ENCODE measurements at regions of chr16 and their contacts with region 1.

Region 1: GRCh38 chr16:67428146-67428731 is 2.7 kb upstream of the HSD11B2 start:
- DNase-seq: peak; percentile 73
- H3K4me3 Mint-ChIP-seq: no peak overlapping the region
- H3K27ac Mint-ChIP-seq: no peak overlapping the region
- H3K4me1 Mint-ChIP-seq: peaks cover 14% of the 10 kb centered on the region
- H3K27me3 Mint-ChIP-seq: peaks cover 12% of the 10 kb centered on the region
- CTCF ChIP-seq: peak; percentile 81

Region 2: DNA sequence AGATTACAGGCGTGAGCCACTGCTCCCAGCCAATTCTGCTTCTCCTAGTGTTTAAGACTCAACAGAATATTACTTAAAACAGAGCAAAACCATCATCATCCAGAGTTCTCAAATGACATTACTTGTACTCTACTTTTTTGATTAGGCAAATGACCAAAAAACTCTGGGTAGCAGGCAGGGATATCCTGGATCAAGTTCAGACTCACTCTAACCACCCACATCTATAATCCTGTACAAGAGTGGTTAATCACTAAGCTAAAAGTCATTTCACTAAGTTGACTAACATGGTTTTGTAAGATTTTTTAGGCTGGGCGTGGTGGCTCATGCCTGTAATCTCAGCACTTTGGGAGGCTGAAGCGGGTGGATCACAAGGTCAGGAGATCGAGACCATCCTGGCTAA is 604.2 kb before region 1 on chr16:
- CTCF ChIA-PET with region 1: no interaction called
- POLR2A ChIA-PET with region 1: no interaction called
- intact Hi-C with region 1: no loop called
- DNase-seq: no peak
- H3K4me3 Mint-ChIP-seq: no peak overlapping the region
- H3K27ac Mint-ChIP-seq: no peak overlapping the region
- H3K4me1 Mint-ChIP-seq: peaks cover 14% of the 10 kb centered on the region
- H3K27me3 Mint-ChIP-seq: no peaks in the 10 kb centered on the region
- CTCF ChIP-seq: no peak

Region 3: DNA sequence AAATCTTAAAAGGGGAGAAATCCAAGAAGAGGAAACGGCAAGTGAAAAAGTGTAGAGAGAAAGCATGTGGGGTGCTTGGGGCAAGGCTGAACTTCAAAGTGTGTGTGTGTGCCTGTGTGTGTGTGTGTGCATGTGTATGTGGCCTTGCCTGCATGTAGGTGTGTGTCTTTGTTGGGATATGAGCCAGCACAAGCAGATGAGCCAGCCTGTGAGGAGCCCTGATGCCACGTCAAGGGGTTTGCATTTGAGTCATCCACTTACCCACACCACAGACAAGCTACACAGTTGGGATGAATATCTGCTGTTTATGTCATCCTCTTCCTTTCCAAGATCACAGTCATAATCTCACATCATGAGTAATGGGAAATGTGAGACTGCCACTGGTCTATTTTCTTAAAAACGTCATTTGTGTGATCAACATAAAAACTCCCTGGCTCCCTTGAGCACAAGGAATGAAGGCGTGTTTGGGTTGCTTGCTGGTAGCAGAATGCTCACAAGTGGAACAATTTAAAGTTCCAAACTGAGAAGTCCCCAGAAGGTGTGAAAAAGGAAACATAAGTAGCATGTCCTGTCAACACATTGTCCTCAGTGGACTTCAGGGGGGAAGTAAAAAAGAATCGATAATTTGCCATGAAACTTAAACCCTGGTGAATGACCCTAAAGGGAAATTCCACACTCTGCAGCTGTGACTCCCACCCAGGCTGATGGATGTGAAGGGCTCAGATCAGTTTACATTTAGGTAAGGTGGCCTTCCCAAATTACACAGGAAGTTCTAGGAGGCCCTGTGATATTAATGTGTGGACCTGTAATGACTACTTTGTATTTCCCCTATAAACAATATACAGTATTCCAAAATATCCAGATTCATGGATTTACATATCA is 116.4 kb before region 1 on chr16:
- CTCF ChIA-PET with region 1: no interaction called
- POLR2A ChIA-PET with region 1: no interaction called
- intact Hi-C with region 1: no loop called
- DNase-seq: peak; percentile 94
- H3K4me3 Mint-ChIP-seq: no peak overlapping the region
- H3K27ac Mint-ChIP-seq: peak overlapping the region; percentile 71
- H3K4me1 Mint-ChIP-seq: peaks cover 16% of the 10 kb centered on the region
- H3K27me3 Mint-ChIP-seq: peaks cover 12% of the 10 kb centered on the region
- CTCF ChIP-seq: no peak

Region 4: DNA sequence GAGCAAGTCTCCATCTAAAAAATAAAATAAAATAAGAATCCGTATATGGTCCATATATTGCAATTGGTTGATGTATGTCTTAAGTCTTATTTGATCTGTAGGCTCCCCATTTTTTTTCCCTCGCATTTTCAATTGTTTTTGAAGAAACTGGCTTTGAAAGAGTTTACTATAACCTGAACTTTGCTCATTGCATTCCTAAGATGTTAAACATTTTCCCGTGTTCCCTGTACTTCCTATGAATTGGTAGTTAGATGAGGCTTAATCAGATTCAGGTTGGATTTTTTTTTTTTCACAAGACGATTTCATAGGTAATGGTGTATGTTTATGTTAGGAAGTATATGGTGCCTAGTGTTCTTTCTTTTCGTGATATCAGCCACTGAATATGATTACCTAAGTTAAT is 98.3 kb before region 1 on chr16:
- CTCF ChIA-PET with region 1: no interaction called
- POLR2A ChIA-PET with region 1: no interaction called
- intact Hi-C with region 1: no loop called
- DNase-seq: no peak
- H3K4me3 Mint-ChIP-seq: no peak overlapping the region
- H3K27ac Mint-ChIP-seq: no peak overlapping the region
- H3K4me1 Mint-ChIP-seq: no peaks in the 10 kb centered on the region
- H3K27me3 Mint-ChIP-seq: peaks cover 15% of the 10 kb centered on the region
- CTCF ChIP-seq: no peak

Region 5: DNA sequence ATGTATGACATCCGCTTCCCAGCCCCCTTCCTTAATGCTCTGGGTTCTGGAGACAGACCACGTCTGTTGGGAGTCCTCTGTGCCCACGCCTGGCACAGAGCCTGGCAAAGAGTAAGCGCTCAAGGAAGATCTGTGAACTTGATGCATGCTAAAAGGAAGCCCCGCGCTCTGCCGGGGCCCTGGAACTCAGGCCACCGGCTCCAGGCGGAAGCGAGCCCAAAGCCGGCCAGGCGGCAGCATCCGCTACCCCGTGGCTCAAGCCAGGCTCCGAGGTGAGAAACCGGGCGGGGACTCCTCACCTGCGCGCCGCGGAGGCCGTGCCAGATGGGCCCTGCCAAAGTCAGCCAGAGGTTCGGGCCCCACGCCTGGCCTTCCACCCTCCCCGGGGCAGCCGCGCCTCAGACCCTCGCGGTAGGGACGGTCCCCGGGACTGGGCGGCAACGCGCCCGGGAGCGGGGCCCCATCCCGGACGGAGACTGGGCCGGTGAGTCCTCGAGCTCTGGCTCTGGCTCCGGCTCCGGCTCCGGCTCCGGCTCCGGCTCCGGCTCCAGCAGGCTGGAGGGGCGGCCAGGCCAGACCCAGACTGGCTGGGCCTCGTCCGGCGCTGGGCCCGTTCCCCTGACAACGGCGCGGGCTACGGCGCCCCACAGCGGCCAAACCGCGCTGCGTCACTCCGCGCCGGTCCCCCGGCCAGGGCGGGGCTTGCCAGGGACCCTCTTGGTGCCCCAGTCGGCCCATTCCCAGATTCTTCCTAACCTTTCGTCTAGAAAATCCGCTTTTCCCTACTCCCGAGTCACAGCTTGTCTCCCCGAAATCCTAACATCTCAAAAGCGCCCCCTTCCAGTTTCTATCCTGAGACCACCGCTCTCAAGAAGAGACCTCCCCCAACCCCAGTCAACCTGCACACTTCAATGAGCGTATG is 12.1 kb before region 1 on chr16 and contains the start of gene ZDHHC1:
- CTCF ChIA-PET with region 1: interaction called, 20 read pairs
- POLR2A ChIA-PET with region 1: interaction called, 6 read pairs
- intact Hi-C with region 1: no loop called
- DNase-seq: peak; percentile 60
- H3K4me3 Mint-ChIP-seq: peak within 1 kb of the TSS; percentile 81
- H3K27ac Mint-ChIP-seq: peak within 1 kb of the TSS; percentile 79
- H3K4me1 Mint-ChIP-seq: peaks cover 16% of the 10 kb centered on the region
- H3K27me3 Mint-ChIP-seq: peaks cover 14% of the 10 kb centered on the region
- CTCF ChIP-seq: peak; percentile 63
- total RNA-seq, gene ZDHHC1: 5.9 and 7.6 TPM in 2 replicates

Region 6: GRCh38 chr16:67441271-67441753 is 13.1 kb after region 1 on chr16:
- CTCF ChIA-PET with region 1: interaction called, 10 read pairs
- POLR2A ChIA-PET with region 1: interaction called, 13 read pairs
- intact Hi-C with region 1: no loop called
- DNase-seq: peak; percentile 58
- H3K4me3 Mint-ChIP-seq: no peak overlapping the region
- H3K27ac Mint-ChIP-seq: peak overlapping the region; percentile 40
- H3K4me1 Mint-ChIP-seq: peaks cover 20% of the 10 kb centered on the region
- H3K27me3 Mint-ChIP-seq: no peaks in the 10 kb centered on the region
- CTCF ChIP-seq: no peak

Region 7: GRCh38 chr16:67447508-67448076 is 19.4 kb after region 1 on chr16:
- CTCF ChIA-PET with region 1: interaction called, 29 read pairs
- POLR2A ChIA-PET with region 1: interaction called, 13 read pairs
- intact Hi-C with region 1: loop called (anchors 1 kb)
- DNase-seq: peak; percentile 75
- H3K4me3 Mint-ChIP-seq: no peak overlapping the region
- H3K27ac Mint-ChIP-seq: no peak overlapping the region
- H3K4me1 Mint-ChIP-seq: no peaks in the 10 kb centered on the region
- H3K27me3 Mint-ChIP-seq: no peaks in the 10 kb centered on the region
- CTCF ChIP-seq: peak; percentile 53

Region 8: GRCh38 chr16:67461600-67462592 is 33.7 kb after region 1 on chr16:
- CTCF ChIA-PET with region 1: interaction called, 53 read pairs
- POLR2A ChIA-PET with region 1: interaction called, 5 read pairs
- intact Hi-C with region 1: loop called (anchors 1 kb)
- DNase-seq: no peak
- H3K4me3 Mint-ChIP-seq: no peak overlapping the region
- H3K27ac Mint-ChIP-seq: peak overlapping the region; percentile 39
- H3K4me1 Mint-ChIP-seq: peaks cover 28% of the 10 kb centered on the region
- H3K27me3 Mint-ChIP-seq: no peaks in the 10 kb centered on the region
- CTCF ChIP-seq: no peak

Region 9: DNA sequence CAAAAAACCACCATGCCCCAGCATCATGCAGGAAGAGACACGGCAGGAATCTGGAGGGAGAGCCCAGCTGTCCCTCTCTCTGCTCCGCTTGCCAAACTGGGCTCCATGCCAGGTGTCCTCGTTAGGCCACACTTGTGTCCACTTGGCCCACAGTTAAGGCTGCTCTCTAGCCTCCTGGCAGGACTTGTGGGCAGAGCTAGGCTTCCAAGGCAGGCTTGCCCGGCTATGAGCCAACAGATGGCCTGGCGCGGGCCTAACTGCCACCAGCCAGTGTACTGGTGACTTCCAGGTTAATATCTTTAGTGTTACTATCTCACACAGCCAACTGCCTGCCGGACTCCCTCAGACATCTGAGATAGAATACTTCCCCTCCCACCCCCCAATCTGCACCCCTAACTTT is 42.1 kb after region 1 on chr16:
- CTCF ChIA-PET with region 1: interaction called, 53 read pairs
- POLR2A ChIA-PET with region 1: interaction called, 5 read pairs
- intact Hi-C with region 1: loop called (anchors 1 kb)
- DNase-seq: no peak
- H3K4me3 Mint-ChIP-seq: no peak overlapping the region
- H3K27ac Mint-ChIP-seq: no peak overlapping the region
- H3K4me1 Mint-ChIP-seq: peaks cover 22% of the 10 kb centered on the region
- H3K27me3 Mint-ChIP-seq: no peaks in the 10 kb centered on the region
- CTCF ChIP-seq: no peak

Region 10: DNA sequence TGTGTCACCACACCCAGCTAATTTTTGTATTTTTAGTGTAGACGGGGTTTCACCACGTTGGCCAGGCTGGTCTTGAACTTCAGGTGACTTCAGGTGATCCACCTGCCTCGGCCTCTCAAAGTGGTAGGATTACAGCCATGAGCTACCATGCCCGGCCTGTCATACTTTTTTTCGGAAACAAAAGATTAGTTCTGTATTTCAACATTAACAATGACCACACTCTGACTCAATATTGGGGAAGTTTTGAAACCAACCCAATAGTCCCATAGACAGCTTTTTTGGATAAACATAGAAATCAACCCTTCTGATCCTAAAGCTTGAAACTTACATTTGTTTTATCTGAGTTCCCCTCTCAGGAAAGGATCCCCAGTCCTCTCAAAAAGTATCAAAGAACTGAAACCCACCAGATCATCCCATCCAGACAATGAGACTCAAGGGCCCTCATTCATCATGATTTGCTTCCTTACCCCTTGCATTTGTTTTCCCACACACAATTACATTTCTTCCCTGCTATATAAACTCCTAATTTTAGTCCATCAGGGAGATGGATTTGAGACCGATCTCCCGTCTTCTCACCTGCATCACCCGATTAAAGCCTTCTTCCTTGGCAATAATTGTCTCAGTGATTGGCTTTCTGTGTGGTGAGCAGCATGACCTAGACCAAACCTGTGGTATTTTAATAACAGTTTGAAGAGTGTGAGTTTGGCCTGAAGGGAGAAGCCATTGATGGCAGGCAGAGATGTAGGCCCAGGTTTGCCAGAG is 62.3 kb after region 1 on chr16:
- CTCF ChIA-PET with region 1: interaction called, 15 read pairs
- POLR2A ChIA-PET with region 1: no interaction called
- intact Hi-C with region 1: no loop called
- DNase-seq: peak; percentile 36
- H3K4me3 Mint-ChIP-seq: no peak overlapping the region
- H3K27ac Mint-ChIP-seq: no peak overlapping the region
- H3K4me1 Mint-ChIP-seq: no peaks in the 10 kb centered on the region
- H3K27me3 Mint-ChIP-seq: no peaks in the 10 kb centered on the region
- CTCF ChIP-seq: no peak

Region 11: DNA sequence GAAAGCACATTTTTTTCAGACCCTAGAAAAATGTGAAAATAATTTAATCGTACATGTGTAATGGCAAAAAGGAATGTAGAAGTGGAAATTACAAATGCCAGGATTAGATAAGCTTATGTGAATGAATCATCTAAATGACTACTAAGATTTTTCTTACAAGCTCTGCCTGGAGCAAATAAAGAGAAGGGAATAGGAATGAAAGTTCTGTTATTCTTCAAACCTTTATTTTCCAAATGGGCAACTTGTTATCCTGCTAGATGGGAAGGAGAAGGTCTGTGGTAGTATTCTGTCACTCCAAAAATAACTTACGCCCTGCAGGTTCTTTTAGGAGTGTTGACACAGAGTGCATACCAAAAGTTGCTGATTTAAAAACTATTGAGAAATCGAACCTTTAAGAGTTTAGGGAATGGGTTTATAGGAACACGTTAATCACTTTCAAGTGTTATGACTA is 143.8 kb after region 1 on chr16:
- CTCF ChIA-PET with region 1: no interaction called
- POLR2A ChIA-PET with region 1: no interaction called
- intact Hi-C with region 1: no loop called
- DNase-seq: peak; percentile 12
- H3K4me3 Mint-ChIP-seq: no peak overlapping the region
- H3K27ac Mint-ChIP-seq: peak overlapping the region; percentile 80
- H3K4me1 Mint-ChIP-seq: peaks cover 8% of the 10 kb centered on the region
- H3K27me3 Mint-ChIP-seq: no peaks in the 10 kb centered on the region
- CTCF ChIP-seq: no peak